Common myeloid progenitor, CD34-positive (primary cell): ENCODE measurements at regions of chr10 and their contacts with region 1.

Region 1: DNA sequence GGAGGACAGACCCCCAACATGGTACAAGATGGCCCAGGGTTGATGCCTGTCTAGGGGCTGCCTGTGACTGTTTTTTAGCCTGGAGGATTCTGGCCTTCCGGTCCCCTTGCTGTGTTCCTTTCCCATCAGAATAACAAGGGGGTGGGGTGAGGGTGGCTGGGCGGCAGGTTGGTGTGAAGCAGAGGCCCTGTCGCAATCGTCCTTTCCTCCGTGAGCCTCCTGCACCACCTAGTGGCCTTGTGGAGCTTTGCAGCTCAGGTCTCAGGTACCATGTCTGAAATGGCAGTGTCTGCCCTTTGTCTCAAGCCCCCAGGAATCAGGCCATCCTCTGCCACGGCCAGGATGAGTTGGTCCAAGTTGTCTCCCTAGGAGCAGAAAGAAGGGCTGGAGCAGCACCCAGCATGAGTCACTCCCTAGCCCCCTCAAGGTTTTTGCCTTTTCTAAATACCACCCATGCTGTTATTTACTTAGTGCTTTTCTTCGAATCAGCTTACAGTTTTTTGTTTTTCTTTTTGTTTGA is 24.2 kb downstream of the TACR2 start:
- DNase-seq: peak; percentile 78 to 90 (median 84)
- H3K4me3 ChIP-seq: no peak overlapping the region
- H3K27ac ChIP-seq: no peak overlapping the region
- H3K4me1 ChIP-seq: peaks cover 0 to 18% (median 18%) of the 10 kb centered on the region in 4 experiments
- H3K27me3 ChIP-seq: no peaks in the 10 kb centered on the region

Region 2: DNA sequence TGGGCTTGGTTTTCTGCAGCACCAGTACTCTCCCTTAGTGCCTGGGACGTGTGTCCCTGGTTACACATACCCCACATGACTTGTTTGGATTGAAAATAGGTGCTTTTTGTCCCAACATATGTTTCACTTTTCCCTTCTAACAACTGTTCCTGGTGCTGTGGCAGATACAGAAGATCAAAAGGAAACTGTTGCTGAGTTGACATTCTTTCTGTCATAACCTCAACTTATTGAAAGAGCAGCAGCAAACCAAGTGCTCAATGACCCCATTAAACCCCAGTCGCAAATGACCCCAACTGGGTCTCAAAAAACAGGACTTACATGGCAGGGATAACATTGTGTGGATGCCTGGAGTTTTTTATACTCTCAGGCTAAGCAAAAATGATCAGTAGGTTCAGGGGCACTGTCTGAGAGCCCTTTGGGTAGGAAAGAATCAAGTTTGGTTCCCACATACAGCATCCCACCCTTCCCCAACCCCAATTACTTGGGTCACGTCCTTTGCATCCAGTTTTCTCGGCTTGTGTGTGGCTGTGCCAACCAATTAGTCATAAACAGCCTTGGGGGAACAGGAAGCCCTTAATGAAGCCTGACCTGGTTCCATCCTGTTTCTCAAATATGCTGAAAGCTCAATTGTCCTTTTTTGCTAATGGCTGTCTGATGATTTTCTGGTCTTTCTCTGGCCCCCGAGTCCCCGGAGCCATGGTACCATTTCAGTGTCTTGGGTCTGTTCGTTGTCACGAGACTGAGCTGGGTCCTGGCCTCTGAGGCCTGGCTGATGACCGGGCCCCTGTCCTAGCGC is 167.5 kb before region 1 on chr10:
- CTCF ChIA-PET with region 1: interaction called, 11 read pairs
- POLR2A ChIA-PET with region 1: no interaction called
- DNase-seq: peak in 2 of 3 donors; percentile 32 to 47
- H3K4me3 ChIP-seq: no peak overlapping the region
- H3K27ac ChIP-seq: no peak overlapping the region
- H3K4me1 ChIP-seq: peaks cover 0 to 59% (median 49%) of the 10 kb centered on the region in 4 experiments
- H3K27me3 ChIP-seq: no peaks in the 10 kb centered on the region

Region 3: DNA sequence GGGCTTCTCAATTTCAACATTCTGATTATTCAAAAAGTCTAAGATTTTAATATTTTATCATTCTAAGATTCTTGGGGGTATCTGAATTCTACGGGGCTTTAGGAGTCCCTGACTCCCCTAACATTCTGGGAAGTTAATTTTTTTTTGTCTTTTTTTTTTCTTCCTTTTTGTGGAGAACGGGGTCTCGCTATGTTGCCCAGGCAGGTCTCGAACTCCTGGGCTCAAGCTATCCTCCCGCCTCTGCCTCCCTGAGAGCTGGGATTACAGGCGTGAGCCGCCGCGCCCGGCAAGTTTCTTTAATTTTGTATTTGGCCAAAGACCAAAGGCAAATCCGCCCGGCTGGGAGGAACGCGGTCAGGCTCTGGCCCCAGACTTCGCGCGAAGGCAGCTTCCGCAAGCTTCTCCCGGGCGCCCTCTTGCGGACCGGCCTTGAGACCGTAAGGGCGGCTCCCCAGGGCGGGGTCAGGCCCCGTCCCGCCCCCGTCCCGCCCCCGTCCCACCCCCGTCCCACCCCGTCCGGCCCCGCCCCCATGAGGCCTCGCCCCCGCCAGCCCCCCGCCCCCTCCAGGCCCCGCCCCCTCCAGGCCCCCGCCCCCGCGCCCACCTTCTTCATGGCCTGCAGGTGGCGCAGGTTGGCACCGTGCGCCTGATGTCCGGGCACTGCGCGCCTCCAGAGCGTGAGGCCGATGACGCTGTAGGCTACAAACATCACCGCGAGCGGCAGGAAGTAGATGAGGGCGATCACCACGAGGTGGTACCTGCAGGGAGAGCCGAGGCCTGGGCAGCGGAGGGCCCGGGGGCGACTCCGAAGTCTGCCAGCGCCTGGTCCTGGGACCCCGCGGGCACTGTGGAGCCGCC is 16.0 kb after region 1 on chr10:
- CTCF ChIA-PET with region 1: interaction called, 29 read pairs
- POLR2A ChIA-PET with region 1: no interaction called
- DNase-seq: peak; percentile 91 to 95 (median 95)
- H3K4me3 ChIP-seq: peak overlapping the region in 4 of 7 experiments; percentile 29 to 62 (median 46)
- H3K27ac ChIP-seq: no peak overlapping the region
- H3K4me1 ChIP-seq: peaks cover 0 to 20% (median 13%) of the 10 kb centered on the region in 4 experiments
- H3K27me3 ChIP-seq: no peaks in the 10 kb centered on the region

Region 4: GRCh38 chr10:69425511-69426298 is 33.2 kb after region 1 on chr10:
- CTCF ChIA-PET with region 1: no interaction called
- POLR2A ChIA-PET with region 1: no interaction called
- DNase-seq: no peak
- H3K4me3 ChIP-seq: no peak overlapping the region
- H3K27ac ChIP-seq: no peak overlapping the region
- H3K4me1 ChIP-seq: peaks cover 0 to 11% (median 2%) of the 10 kb centered on the region in 4 experiments
- H3K27me3 ChIP-seq: no peaks in the 10 kb centered on the region